ENCODE measurements at regions of chr1 and their contacts with region 1.

Region 1: GRCh38 chr1:75188892-75189291 is 54.7 kb downstream of the LHX8 start:
- DNase-seq: no peak

Region 2: GRCh38 chr1:74775735-74776134 is 413.2 kb before region 1 on chr1:
- in situ Hi-C with region 1: loop called (anchors 25 kb)
- DNase-seq: no peak